ENCODE measurements at regions of chr20 and their contacts with region 1.

Region 1: DNA sequence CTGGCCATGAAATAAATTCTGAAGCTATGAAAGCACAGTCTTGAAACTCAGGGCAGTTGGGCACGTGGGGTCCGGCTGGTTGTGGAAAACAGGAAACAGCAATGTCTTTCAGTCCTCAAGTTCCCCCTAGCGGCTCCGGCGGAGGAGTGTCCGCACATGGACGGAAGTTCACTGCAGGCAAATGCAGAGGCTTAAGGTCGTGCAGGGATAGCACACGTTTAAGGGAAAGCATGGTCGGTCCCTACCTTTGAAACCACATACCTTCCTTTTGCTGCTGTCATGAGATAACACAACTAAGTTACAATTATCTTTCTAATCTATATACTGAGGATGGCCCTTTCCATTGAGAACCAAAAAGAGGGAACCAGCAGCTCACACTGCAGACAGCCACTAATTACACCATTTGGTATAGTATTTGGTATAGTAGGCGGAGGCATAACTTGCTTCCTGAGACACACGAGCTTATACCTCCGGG is 52.6 kb upstream of the NFATC2 start:
- DNase-seq: peak; percentile 64
- H3K4me3 ChIP-seq: no peak overlapping the region
- H3K27ac ChIP-seq: no peak overlapping the region
- H3K4me1 ChIP-seq: no peaks in the 10 kb centered on the region
- H3K27me3 ChIP-seq: no peaks in the 10 kb centered on the region
- CTCF ChIP-seq: peak; percentile 90 to 94

Region 2: GRCh38 chr20:51306503-51307358 is 288.4 kb before region 1 on chr20:
- CTCF ChIA-PET with region 1: no interaction called
- dilution Hi-C with region 1: no loop called
- in situ Hi-C with region 1: no loop called
- intact Hi-C with region 1: loop called (anchors 2 kb)
- DNase-seq: peak; percentile 41
- H3K4me3 ChIP-seq: no peak overlapping the region
- H3K27ac ChIP-seq: no peak overlapping the region
- H3K4me1 ChIP-seq: no peaks in the 10 kb centered on the region
- H3K27me3 ChIP-seq: no peaks in the 10 kb centered on the region
- CTCF ChIP-seq: peak; percentile 74 to 94

Region 3: GRCh38 chr20:51326201-51326819 is 268.8 kb before region 1 on chr20:
- CTCF ChIA-PET with region 1: no interaction called
- dilution Hi-C with region 1: loop called (anchors 5 kb)
- in situ Hi-C with region 1: no loop called
- intact Hi-C with region 1: no loop called
- DNase-seq: no peak
- H3K4me3 ChIP-seq: no peak overlapping the region
- H3K27ac ChIP-seq: no peak overlapping the region
- H3K4me1 ChIP-seq: peaks cover 10% of the 10 kb centered on the region
- H3K27me3 ChIP-seq: no peaks in the 10 kb centered on the region
- CTCF ChIP-seq: peak; percentile 55 to 72

Region 4: DNA sequence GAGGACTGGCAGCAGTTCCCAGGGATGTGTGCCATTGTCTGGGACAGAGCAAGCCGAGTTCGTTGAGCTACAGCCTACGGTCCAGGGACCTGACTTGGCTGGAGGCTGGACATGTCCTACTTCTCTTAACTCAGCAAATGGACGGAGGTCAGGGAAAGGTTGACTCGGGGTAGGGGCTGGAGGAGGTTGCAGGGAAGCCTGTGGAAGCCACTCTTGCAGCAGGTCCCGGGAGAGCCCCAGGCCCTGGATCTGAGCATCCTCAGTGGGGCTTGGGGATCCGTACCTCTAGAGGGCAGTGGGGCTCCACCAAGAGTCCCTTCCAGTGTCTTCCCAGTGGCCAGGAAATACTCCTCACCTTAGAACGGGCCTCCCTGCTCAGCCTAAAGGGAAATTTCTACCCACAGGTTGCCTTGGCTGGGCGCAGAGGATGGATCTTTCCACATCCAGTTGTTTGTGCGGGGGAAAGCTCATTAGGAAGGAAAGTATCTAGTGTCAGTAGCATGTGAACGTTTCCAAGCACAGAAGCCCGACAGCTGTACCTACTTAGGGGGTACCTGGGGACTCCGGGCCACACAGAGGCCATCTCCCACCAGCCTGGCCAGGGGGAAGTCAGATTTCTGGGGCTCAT is 222.8 kb before region 1 on chr20:
- CTCF ChIA-PET with region 1: no interaction called
- dilution Hi-C with region 1: no loop called
- in situ Hi-C with region 1: loop called (anchors 5 kb)
- intact Hi-C with region 1: loop called (anchors 1 kb)
- DNase-seq: peak; percentile 62
- H3K4me3 ChIP-seq: no peak overlapping the region
- H3K27ac ChIP-seq: no peak overlapping the region
- H3K4me1 ChIP-seq: peaks cover under 1% of the 10 kb centered on the region
- H3K27me3 ChIP-seq: no peaks in the 10 kb centered on the region
- CTCF ChIP-seq: peak; percentile 82 to 94

Region 5: GRCh38 chr20:51385646-51386530 is 209.2 kb before region 1 on chr20:
- CTCF ChIA-PET with region 1: interaction called, 6 read pairs
- dilution Hi-C with region 1: loop called (anchors 5 kb)
- in situ Hi-C with region 1: no loop called
- intact Hi-C with region 1: loop called (anchors 1 kb)
- DNase-seq: peak; percentile 16
- H3K4me3 ChIP-seq: no peak overlapping the region
- H3K27ac ChIP-seq: no peak overlapping the region
- H3K4me1 ChIP-seq: no peaks in the 10 kb centered on the region
- H3K27me3 ChIP-seq: no peaks in the 10 kb centered on the region
- CTCF ChIP-seq: peak; percentile 41 to 79

Region 6: GRCh38 chr20:51393571-51393970 is 201.5 kb before region 1 on chr20:
- CTCF ChIA-PET with region 1: no interaction called
- dilution Hi-C with region 1: loop called (anchors 5 kb)
- in situ Hi-C with region 1: no loop called
- intact Hi-C with region 1: no loop called
- DNase-seq: no peak
- H3K4me3 ChIP-seq: no peak overlapping the region
- H3K27ac ChIP-seq: no peak overlapping the region
- H3K4me1 ChIP-seq: no peaks in the 10 kb centered on the region
- H3K27me3 ChIP-seq: no peaks in the 10 kb centered on the region
- CTCF ChIP-seq: no peak

Region 7: GRCh38 chr20:51412333-51412871 is 182.7 kb before region 1 on chr20:
- CTCF ChIA-PET with region 1: no interaction called
- dilution Hi-C with region 1: no loop called
- in situ Hi-C with region 1: no loop called
- intact Hi-C with region 1: no loop called
- DNase-seq: peak; percentile 22
- H3K4me3 ChIP-seq: no peak overlapping the region
- H3K27ac ChIP-seq: no peak overlapping the region
- H3K4me1 ChIP-seq: peaks cover 5% of the 10 kb centered on the region
- H3K27me3 ChIP-seq: no peaks in the 10 kb centered on the region
- CTCF ChIP-seq: no peak